Motor neuron (in vitro differentiated cells): ENCODE measurements at regions of chrX and their contacts with region 1.

Region 1: DNA sequence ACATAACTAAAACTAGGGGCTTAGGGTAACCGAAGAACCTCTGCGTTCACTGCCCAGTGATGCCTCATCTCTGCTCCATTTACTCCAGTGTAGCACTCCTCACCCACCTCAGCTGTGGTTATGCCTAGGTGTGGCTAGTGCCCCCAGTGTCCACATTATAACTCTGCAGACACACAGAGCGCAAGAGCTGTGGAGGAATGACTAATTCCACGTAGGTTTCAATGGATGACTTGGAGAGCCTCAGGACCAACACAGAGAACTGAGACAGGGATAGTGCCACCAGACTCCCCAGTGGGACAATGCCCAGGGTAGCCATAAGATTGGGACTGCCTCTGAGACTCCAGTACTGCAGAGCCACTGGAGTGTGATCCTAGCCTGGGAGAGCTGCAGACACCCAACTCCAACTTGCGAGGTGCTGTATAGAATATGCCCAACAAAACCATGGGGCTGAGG is 542.4 kb upstream of the DIPK2B start:
- ATAC-seq: peak in 3 of 8 experiments; percentile 48 to 68 (median 60)
- H3K4me3 ChIP-seq: no peak overlapping the region
- H3K27ac ChIP-seq: no peak overlapping the region
- H3K4me1 ChIP-seq: no peaks in the 10 kb centered on the region

Region 2: DNA sequence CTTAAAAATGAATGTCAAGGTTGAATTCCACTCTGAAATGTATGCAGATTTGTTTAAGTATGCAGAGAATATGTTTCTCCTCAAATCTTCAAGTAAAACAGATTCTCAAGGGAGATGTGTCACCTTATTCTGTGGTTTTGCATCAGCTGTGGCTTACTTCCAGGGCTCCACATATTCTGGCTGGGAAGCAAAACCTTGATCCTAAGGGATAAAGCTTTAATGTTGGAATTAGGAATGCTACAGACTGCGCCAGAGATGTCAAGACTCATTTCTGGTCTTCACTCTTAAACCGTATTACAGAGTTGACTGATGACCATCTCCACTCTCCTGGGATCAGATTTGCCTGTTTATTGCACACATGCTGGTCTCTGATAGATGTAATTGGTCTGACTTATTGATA is 398.5 kb before region 1 on chrX:
- in situ Hi-C with region 1: loop called in 1 of 9 experiments (anchors 25 kb)
- ATAC-seq: peak in 1 of 8 experiments; percentile 79
- H3K4me3 ChIP-seq: no peak overlapping the region
- H3K27ac ChIP-seq: no peak overlapping the region
- H3K4me1 ChIP-seq: no peaks in the 10 kb centered on the region